AG04449 (cell line): ENCODE measurements at regions of chr13 and their contacts with region 1.

Region 1: GRCh38 chr13:46553886-46554858 is 1.2 kb downstream of the LRCH1 start:
- DNase-seq: no peak
- H3K4me3 ChIP-seq: peak overlapping the region; percentile 89
- CTCF ChIP-seq: peak; percentile 34

Region 2: DNA sequence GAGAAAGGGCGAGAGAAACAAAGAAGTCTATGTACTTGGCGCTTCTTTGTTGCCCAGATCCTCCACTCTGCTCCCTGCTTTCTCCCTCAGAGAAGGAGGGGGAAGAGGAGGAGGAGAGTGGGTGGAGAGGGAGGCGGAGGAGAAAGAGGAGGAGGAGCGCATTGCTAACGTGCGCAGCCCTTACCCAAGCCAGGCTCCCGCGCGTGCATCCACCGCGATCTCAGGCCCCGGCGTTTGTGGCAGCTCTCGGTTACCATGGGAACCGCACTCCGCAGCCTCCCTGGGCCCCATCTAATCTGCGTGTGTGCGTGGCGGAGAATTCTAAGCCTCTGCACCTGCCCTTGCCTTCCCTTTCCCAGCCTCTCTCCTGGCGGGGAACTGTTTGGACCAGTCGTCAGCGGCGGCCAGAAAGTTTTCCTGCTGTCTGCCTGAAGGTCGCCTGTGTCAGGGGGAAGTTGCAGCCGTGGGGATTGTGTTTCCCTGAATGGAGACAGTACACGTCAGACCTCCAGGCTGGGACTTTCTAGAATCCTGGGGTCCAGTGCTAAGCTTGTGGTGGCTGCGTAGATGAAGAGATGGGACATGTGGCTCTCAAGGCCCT is 938.6 kb before region 1 on chr13 and contains the start of gene ERICH6B:
- CTCF ChIA-PET with region 1: no interaction called
- POLR2A ChIA-PET with region 1: no interaction called
- DNase-seq: no peak
- H3K4me3 ChIP-seq: peak within 1 kb of the TSS; percentile 20
- CTCF ChIP-seq: no peak

Region 3: DNA sequence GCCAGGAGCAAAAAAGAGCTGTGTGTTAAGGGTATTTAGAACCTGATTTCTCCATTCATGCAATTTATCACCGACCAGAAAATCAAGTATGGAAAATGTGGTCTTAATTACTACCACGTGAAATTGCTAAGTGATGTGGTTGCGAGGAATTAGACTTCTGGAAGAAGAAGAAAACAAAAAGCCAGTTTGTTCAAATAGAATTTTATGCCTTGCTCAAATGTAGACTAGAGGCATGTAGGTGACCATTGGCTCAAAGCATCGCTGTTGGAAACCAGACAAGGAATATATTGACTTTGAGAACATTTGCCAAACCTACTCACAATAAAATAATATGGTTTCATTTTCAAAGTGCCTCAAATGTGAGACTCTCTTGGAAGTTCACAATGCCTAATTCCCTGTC is 58.5 kb before region 1 on chr13:
- CTCF ChIA-PET with region 1: interaction called, 13 read pairs
- POLR2A ChIA-PET with region 1: no interaction called
- DNase-seq: no peak
- H3K4me3 ChIP-seq: no peak overlapping the region
- CTCF ChIP-seq: no peak

Region 4: GRCh38 chr13:46565808-46566750 is 11.9 kb after region 1 on chr13:
- CTCF ChIA-PET with region 1: interaction called, 19 read pairs
- POLR2A ChIA-PET with region 1: no interaction called
- DNase-seq: no peak
- H3K4me3 ChIP-seq: no peak overlapping the region
- CTCF ChIP-seq: no peak

Region 5: GRCh38 chr13:46577696-46578589 is 23.8 kb after region 1 on chr13:
- CTCF ChIA-PET with region 1: interaction called, 26 read pairs
- POLR2A ChIA-PET with region 1: no interaction called
- DNase-seq: no peak
- H3K4me3 ChIP-seq: no peak overlapping the region; the same call in none of the 2 replicates
- CTCF ChIP-seq: no peak

Region 6: DNA sequence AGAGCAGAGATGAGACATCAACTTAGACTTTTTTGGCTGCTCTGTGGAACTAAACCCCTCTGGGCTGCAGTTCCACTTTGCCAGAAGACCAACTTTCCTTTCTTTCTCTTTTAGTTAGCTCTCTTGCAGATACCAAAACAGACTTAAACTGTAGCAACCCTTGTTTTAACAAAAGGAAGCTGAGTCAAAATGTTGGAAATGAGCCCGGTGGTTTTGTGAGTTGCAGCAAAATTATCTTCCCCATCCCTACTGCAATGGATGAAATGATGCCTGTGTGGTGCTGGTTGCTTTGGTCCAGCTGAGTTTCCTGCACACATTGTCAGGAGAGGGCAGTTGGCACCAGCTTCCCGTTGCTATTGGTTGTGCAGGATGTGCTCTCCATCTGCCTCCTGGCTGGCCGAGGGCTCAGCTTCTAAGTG is 114.1 kb after region 1 on chr13:
- CTCF ChIA-PET with region 1: interaction called, 12 read pairs
- POLR2A ChIA-PET with region 1: no interaction called
- DNase-seq: peak; percentile 66
- H3K4me3 ChIP-seq: peak overlapping the region; percentile 43
- CTCF ChIP-seq: no peak

Region 7: DNA sequence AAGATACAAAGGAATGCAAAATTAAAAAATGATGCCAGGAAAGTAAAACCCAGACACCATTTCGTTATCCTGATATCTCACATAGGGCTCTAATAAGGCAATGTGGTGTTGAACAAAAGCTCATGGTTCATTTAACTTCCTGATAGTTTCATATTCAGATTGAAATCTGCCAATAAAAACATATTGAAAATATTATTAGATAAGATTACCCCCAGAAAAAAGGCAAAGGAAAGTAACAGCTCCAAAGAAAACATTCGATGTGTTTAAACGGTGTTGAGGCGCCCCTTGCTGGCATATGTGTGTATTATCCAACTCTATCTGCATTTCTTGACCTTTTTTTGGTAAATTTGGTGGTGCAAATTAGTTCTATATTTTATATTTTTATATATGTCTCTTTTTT is 166.9 kb after region 1 on chr13:
- CTCF ChIA-PET with region 1: interaction called, 188 read pairs
- POLR2A ChIA-PET with region 1: interaction called, 3 read pairs
- DNase-seq: no peak
- H3K4me3 ChIP-seq: no peak overlapping the region
- CTCF ChIP-seq: peak; percentile 49

Region 8: GRCh38 chr13:46850214-46850613 is 296.0 kb after region 1 on chr13:
- CTCF ChIA-PET with region 1: no interaction called
- POLR2A ChIA-PET with region 1: no interaction called
- DNase-seq: no peak
- H3K4me3 ChIP-seq: no peak overlapping the region
- CTCF ChIP-seq: no peak